CD8-positive, alpha-beta T cell (primary cell): ENCODE measurements at regions of chr4 and their contacts with region 1.

Region 1: GRCh38 chr4:7843831-7844593 is 95.6 kb downstream of the AFAP1 start:
- DNase-seq: peak; percentile 42 to 82 (median 74)
- ATAC-seq: peak; percentile 94
- H3K4me3 ChIP-seq: no peak overlapping the region
- H3K4me3 Mint-ChIP-seq: no peak overlapping the region
- H3K27ac ChIP-seq: no peak overlapping the region
- H3K27ac Mint-ChIP-seq: no peak overlapping the region
- H3K4me1 ChIP-seq: no peaks in the 10 kb centered on the region
- H3K4me1 Mint-ChIP-seq: peaks cover 26% of the 10 kb centered on the region
- H3K27me3 ChIP-seq: no peaks in the 10 kb centered on the region
- H3K27me3 Mint-ChIP-seq: no peaks in the 10 kb centered on the region
- CTCF ChIP-seq: peak; percentile 60

Region 2: GRCh38 chr4:7770224-7771050 is 73.6 kb before region 1 on chr4:
- CTCF ChIA-PET with region 1: no interaction called
- POLR2A ChIA-PET with region 1: no interaction called
- intact Hi-C with region 1: loop called in 1 of 2 experiments (anchors 2 kb)
- DNase-seq: no peak
- ATAC-seq: no peak
- H3K4me3 ChIP-seq: no peak overlapping the region
- H3K4me3 Mint-ChIP-seq: peak overlapping the region; percentile 47
- H3K27ac ChIP-seq: no peak overlapping the region
- H3K27ac Mint-ChIP-seq: peak overlapping the region; percentile 75
- H3K4me1 ChIP-seq: peaks cover 15% of the 10 kb centered on the region
- H3K4me1 Mint-ChIP-seq: peaks cover 20% of the 10 kb centered on the region
- H3K27me3 ChIP-seq: no peaks in the 10 kb centered on the region
- H3K27me3 Mint-ChIP-seq: no peaks in the 10 kb centered on the region
- CTCF ChIP-seq: no peak

Region 3: GRCh38 chr4:7827991-7828720 is 15.9 kb before region 1 on chr4:
- CTCF ChIA-PET with region 1: interaction called, 12 read pairs
- POLR2A ChIA-PET with region 1: interaction called, 3 read pairs
- intact Hi-C with region 1: no loop called
- DNase-seq: peak; percentile 29 to 89 (median 59)
- ATAC-seq: peak; percentile 82
- H3K4me3 ChIP-seq: peak overlapping the region in 1 of 2 experiments; percentile 12
- H3K4me3 Mint-ChIP-seq: peak overlapping the region; percentile 56
- H3K27ac ChIP-seq: peak overlapping the region; percentile 21 to 69
- H3K27ac Mint-ChIP-seq: peak overlapping the region; percentile 94
- H3K4me1 ChIP-seq: peaks cover 31% of the 10 kb centered on the region
- H3K4me1 Mint-ChIP-seq: peaks cover 47% of the 10 kb centered on the region
- H3K27me3 ChIP-seq: no peaks in the 10 kb centered on the region
- H3K27me3 Mint-ChIP-seq: no peaks in the 10 kb centered on the region
- CTCF ChIP-seq: no peak

Region 4: GRCh38 chr4:7987148-7987989 is 143.4 kb after region 1 on chr4:
- CTCF ChIA-PET with region 1: interaction called, 25 read pairs
- POLR2A ChIA-PET with region 1: no interaction called
- intact Hi-C with region 1: loop called (anchors 1 kb)
- DNase-seq: peak; percentile 56 to 84 (median 76)
- ATAC-seq: peak; percentile 77
- H3K4me3 ChIP-seq: no peak overlapping the region
- H3K4me3 Mint-ChIP-seq: no peak overlapping the region
- H3K27ac ChIP-seq: no peak overlapping the region
- H3K27ac Mint-ChIP-seq: no peak overlapping the region
- H3K4me1 ChIP-seq: peaks cover 5% of the 10 kb centered on the region
- H3K4me1 Mint-ChIP-seq: peaks cover 6% of the 10 kb centered on the region
- H3K27me3 ChIP-seq: no peaks in the 10 kb centered on the region
- H3K27me3 Mint-ChIP-seq: peaks cover 2% of the 10 kb centered on the region
- CTCF ChIP-seq: peak; percentile 76